ENCODE measurements at regions of chr17 and their contacts with region 1.

Region 1: DNA sequence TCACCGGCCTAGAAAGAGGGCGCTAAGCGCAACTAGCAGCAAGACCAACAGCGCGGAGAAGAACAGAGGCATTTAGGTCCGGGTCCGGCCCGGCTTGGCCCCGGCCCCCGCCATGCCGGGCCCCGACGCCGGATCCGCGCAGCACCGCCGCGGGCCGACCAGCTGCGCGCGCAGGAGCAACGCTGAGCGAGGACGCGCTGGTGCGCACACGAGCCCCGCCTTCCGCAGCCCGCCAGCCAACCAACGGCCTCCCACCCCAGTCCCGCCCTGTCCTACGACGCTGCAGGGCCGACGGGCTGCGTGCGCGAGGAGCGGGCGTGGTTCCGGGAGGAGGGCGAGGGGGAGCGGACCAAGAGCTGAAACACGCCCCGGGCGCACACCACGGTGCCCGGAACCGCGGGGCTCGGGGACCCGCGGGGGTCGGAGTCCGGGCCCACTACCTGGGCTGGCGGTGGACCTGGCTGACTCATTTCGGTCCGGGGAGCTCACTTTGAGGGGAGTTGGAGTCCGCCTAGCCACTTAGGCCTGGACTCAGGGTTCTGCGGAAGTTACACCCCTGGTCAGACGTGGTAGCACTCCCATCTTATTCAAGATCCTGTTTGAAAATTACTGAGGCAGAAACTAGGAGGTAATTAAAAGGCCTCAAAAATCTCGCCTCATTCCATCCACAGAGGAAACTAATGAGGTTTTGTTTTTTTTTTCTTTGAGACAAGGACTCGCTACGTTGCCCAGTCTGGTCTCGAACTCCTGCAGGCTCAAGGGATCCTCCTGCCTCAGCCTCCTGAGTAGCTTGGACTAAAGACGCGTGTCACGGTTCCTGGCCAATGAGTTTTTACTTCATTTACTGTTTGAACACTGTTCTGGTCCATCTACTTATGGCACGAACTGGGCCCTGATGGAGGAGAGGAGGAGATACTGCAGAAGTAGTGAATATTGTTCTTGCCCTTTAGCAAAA is at the start of gene BLTP2:
- DNase-seq: peak; percentile 91
- ATAC-seq: peak; percentile 97
- H3K4me3 Mint-ChIP-seq: peak within 1 kb of the TSS; percentile 97
- H3K27ac Mint-ChIP-seq: peak within 1 kb of the TSS; percentile 91
- H3K4me1 Mint-ChIP-seq: peaks cover 40% of the 10 kb centered on the region
- H3K27me3 Mint-ChIP-seq: no peaks in the 10 kb centered on the region
- CTCF ChIP-seq: no peak
- total RNA-seq, gene BLTP2: 162 and 182 TPM in 2 replicates

Region 2: GRCh38 chr17:28552246-28552999 is 92.8 kb before region 1 on chr17 and contains the start of gene UNC119:
- CTCF ChIA-PET with region 1: no interaction called
- POLR2A ChIA-PET with region 1: interaction called, 18 read pairs
- intact Hi-C with region 1: loop called (anchors 1 kb)
- DNase-seq: peak; percentile 85
- ATAC-seq: peak; percentile 66
- H3K4me3 Mint-ChIP-seq: peak within 1 kb of the TSS; percentile 97
- H3K27ac Mint-ChIP-seq: peak within 1 kb of the TSS; percentile 93
- H3K4me1 Mint-ChIP-seq: peaks cover 65% of the 10 kb centered on the region
- H3K27me3 Mint-ChIP-seq: no peaks in the 10 kb centered on the region
- CTCF ChIP-seq: no peak
- total RNA-seq, gene UNC119: 426 and 437 TPM in 2 replicates

Region 3: DNA sequence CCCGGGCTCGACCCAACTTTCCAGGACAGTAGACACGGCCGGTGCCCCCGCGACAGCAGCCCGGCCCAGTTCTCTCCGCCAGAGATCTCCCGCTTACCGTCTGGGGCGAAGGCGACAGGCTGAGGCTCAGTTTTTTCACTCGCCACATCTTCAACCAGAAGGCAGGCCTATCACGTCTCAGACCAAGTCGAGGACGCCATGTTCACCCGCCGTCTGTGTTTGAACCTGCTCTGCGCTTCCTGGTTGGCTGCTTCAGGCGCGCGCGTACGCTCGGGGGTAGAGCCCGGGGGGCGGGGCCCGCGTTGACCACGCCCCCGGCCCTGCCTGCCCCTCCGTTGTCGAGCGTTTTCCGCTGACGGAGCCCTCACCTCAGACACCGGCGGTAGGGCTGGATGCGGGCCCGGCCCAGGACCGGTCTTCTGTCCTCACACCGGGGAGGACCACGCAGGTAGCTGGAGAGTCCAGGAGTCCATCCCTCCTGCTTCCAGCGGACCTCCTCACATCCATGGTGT is 46.4 kb before region 1 on chr17 and contains the start of gene SPAG5:
- CTCF ChIA-PET with region 1: interaction called, 3 read pairs
- POLR2A ChIA-PET with region 1: interaction called, 9 read pairs
- intact Hi-C with region 1: loop called (anchors 1 kb)
- DNase-seq: peak; percentile 94
- ATAC-seq: peak; percentile 89
- H3K4me3 Mint-ChIP-seq: peak within 1 kb of the TSS; percentile 87
- H3K27ac Mint-ChIP-seq: peak within 1 kb of the TSS; percentile 96
- H3K4me1 Mint-ChIP-seq: peaks cover 24% of the 10 kb centered on the region
- H3K27me3 Mint-ChIP-seq: no peaks in the 10 kb centered on the region
- CTCF ChIP-seq: no peak
- total RNA-seq, gene SPAG5: 14.6 and 15.8 TPM in 2 replicates

Region 4: GRCh38 chr17:28661635-28662537 is 16.6 kb after region 1 on chr17 and contains the starts of genes SDF2 and SUPT6H:
- CTCF ChIA-PET with region 1: interaction called, 16 read pairs
- POLR2A ChIA-PET with region 1: interaction called, 100 read pairs
- intact Hi-C with region 1: loop called (anchors 1 kb)
- DNase-seq: peak; percentile 95
- ATAC-seq: peak; percentile 83
- H3K4me3 Mint-ChIP-seq: peak within 1 kb of the TSS; percentile 98
- H3K27ac Mint-ChIP-seq: peak within 1 kb of the TSS; percentile 100
- H3K4me1 Mint-ChIP-seq: peaks cover 56% of the 10 kb centered on the region
- H3K27me3 Mint-ChIP-seq: no peaks in the 10 kb centered on the region
- CTCF ChIP-seq: no peak
- total RNA-seq, gene SDF2: 36.1 and 47.7 TPM in 2 replicates
- total RNA-seq, gene SUPT6H: 77.1 and 92.4 TPM in 2 replicates

Region 5: DNA sequence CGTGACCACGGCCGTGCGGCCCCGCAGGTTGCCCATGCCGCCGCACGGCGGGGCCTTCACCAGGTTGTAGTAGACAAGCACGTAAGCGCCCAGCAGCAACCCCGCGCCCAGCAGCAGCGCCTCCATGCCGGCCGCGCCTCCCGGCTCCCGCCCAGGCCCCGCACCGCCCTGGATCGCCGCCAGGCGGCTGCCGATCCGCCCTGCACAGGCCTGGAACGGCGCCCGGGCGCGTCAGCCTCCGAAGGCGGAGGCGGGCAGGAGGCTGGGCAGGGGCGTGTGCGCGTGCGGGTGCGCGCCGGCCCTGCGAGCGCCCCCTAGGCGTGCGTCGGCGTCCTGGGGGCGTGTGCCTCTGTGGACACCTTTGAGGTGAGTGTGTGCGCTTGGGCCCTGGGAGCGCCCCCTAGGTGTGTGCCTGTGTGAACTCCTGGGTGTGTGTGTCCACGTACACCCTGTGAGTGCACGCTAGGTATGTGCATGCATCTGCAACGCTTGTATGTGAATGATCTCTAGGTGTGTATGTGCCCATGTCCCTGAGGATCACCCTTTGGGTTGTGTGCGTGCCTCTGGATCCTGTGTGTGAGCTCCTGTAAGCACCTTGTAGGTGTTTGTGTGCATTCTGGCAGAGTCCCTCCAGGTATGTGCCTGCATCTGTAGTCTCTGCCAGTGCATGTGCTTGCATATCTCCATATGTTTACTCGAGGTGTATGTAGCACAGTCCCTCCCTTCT is 257.7 kb after region 1 on chr17 and contains the start of gene DHRS13:
- CTCF ChIA-PET with region 1: interaction called, 3 read pairs
- POLR2A ChIA-PET with region 1: interaction called, 17 read pairs
- intact Hi-C with region 1: loop called (anchors 2 kb)
- DNase-seq: peak; percentile 97
- ATAC-seq: peak; percentile 90
- H3K4me3 Mint-ChIP-seq: peak within 1 kb of the TSS; percentile 82
- H3K27ac Mint-ChIP-seq: peak within 1 kb of the TSS; percentile 77
- H3K4me1 Mint-ChIP-seq: peaks cover 37% of the 10 kb centered on the region
- H3K27me3 Mint-ChIP-seq: no peaks in the 10 kb centered on the region
- CTCF ChIP-seq: peak; percentile 82
- total RNA-seq, gene DHRS13: 32.0 and 39.6 TPM in 2 replicates